ENCODE measurements at regions of chr3 and their contacts with region 1.

Region 1: GRCh38 chr3:65659396-65659795 is 379.3 kb downstream of the MAGI1 start:
- DNase-seq: no peak
- H3K4me3 ChIP-seq: no peak overlapping the region
- H3K27ac ChIP-seq: no peak overlapping the region
- H3K4me1 ChIP-seq: no peaks in the 10 kb centered on the region
- H3K27me3 ChIP-seq: no peaks in the 10 kb centered on the region
- CTCF ChIP-seq: no peak

Region 2: GRCh38 chr3:64806668-64807605 is 852.5 kb before region 1 on chr3:
- CTCF ChIA-PET with region 1: no interaction called
- dilution Hi-C with region 1: no loop called
- in situ Hi-C with region 1: no loop called
- intact Hi-C with region 1: no loop called
- DNase-seq: no peak
- H3K4me3 ChIP-seq: no peak overlapping the region
- H3K27ac ChIP-seq: no peak overlapping the region
- H3K4me1 ChIP-seq: peaks cover 5% of the 10 kb centered on the region
- H3K27me3 ChIP-seq: no peaks in the 10 kb centered on the region
- CTCF ChIP-seq: no peak

Region 3: DNA sequence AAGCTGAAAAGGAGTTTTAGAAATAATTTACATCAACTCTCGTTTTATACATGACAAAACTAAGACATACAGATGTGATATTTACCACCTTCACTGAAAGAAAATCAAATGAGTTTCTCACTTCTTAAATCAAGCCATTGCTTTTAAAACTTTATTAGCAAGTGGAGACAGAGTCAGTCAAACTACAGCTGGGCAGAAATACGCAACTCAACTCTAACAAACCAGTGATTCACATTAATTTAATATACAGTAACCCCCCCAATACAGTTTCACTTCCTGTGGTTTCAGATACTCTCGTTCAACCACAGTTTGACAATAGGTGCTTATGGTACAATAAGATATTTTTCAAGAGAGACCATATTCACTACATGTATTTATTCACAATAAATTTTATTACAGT is 97.8 kb before region 1 on chr3:
- CTCF ChIA-PET with region 1: no interaction called
- dilution Hi-C with region 1: no loop called
- in situ Hi-C with region 1: no loop called
- intact Hi-C with region 1: no loop called
- DNase-seq: no peak
- H3K4me3 ChIP-seq: no peak overlapping the region
- H3K27ac ChIP-seq: no peak overlapping the region
- H3K4me1 ChIP-seq: peaks cover 5% of the 10 kb centered on the region
- H3K27me3 ChIP-seq: no peaks in the 10 kb centered on the region
- CTCF ChIP-seq: no peak

Region 4: GRCh38 chr3:65713016-65713415 is 53.6 kb after region 1 on chr3:
- CTCF ChIA-PET with region 1: no interaction called
- dilution Hi-C with region 1: no loop called
- in situ Hi-C with region 1: no loop called
- intact Hi-C with region 1: no loop called
- DNase-seq: peak; percentile 20
- H3K4me3 ChIP-seq: no peak overlapping the region
- H3K27ac ChIP-seq: no peak overlapping the region
- H3K4me1 ChIP-seq: no peaks in the 10 kb centered on the region
- H3K27me3 ChIP-seq: no peaks in the 10 kb centered on the region
- CTCF ChIP-seq: no peak

Region 5: DNA sequence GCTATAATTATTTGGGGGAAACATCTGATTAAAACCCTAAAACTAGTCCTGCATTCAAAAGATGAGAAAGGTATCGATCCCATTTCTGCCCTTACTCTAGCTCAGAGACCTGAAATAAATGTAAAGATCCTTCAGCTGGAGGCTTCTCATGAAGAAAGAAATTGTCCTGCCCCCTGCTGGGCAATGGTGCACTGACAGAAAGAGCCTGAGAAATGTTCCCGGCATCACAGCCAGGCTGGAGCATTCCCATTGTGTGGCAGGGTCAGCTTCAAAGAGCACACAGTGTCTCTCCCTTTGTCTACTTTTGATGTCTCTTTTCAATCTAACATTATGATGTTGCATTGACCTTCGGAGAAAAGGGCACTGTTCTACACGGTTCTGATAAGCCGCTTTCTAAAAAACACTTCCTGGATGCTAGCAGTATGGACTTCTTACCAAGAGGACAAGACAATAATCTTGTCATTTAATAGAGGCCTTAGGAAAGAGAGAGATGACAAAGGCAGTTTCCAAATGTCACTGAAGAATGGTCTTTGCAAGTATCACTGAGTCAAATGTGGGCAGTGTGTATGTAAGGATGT is 91.8 kb after region 1 on chr3:
- CTCF ChIA-PET with region 1: interaction called, 13 read pairs
- dilution Hi-C with region 1: no loop called
- in situ Hi-C with region 1: no loop called
- intact Hi-C with region 1: no loop called
- DNase-seq: peak; percentile 11
- H3K4me3 ChIP-seq: no peak overlapping the region
- H3K27ac ChIP-seq: no peak overlapping the region
- H3K4me1 ChIP-seq: no peaks in the 10 kb centered on the region
- H3K27me3 ChIP-seq: no peaks in the 10 kb centered on the region
- CTCF ChIP-seq: peak; percentile 73 to 76

Measured in mammary epithelial cell (primary cell).